A549 (cell line): ENCODE measurements at regions of chr19 and their contacts with region 1.

Region 1: DNA sequence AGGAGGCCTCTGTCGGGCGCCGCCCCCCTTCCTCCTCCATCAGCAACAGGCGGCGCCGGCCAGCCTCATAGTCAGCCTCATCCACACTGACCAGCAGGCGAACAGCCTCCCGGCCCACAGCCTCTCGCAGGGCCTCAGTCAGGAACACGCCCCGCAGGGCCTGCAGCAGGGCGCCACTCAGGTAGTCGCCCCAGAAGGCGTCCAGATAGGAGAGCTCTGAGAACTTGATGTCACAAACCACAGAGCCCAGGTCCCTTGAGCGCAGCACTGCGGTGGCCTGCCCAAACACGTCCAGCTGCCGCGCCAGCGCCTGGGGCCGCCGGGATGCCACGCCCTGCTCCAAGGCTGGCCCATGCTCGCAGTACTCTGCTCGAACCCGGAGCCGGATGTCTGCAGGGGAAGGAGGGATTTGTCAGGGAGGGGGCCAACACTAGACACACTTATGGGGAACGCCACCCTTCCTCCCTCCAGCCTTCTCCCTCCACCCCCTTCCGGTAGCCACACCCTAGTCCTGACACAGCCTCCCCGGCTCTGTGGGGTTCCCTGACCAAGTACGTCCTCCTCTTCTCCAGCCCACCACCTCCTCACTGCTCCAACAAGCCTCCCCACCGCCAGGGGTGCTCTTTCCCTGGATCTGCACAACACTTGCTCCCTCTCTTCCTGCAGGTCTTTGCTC is 17.9 kb downstream of the DEDD2 start:
- DNase-seq: no peak
- ATAC-seq: peak in 1 of 2 experiments; percentile 35; a peak in 3 of 6 replicates
- H3K4me3 ChIP-seq: no peak overlapping the region
- H3K27ac ChIP-seq: peak overlapping the region in 1 of 2 experiments; percentile 9; a peak in 1 of 6 replicates
- H3K4me1 ChIP-seq: no peaks in the 10 kb centered on the region
- CTCF ChIP-seq: no peak
- EP300 ChIP-seq: no peak
- POLR2A ChIP-seq: no peak
- RAD21 ChIP-seq: no peak

Region 2: DNA sequence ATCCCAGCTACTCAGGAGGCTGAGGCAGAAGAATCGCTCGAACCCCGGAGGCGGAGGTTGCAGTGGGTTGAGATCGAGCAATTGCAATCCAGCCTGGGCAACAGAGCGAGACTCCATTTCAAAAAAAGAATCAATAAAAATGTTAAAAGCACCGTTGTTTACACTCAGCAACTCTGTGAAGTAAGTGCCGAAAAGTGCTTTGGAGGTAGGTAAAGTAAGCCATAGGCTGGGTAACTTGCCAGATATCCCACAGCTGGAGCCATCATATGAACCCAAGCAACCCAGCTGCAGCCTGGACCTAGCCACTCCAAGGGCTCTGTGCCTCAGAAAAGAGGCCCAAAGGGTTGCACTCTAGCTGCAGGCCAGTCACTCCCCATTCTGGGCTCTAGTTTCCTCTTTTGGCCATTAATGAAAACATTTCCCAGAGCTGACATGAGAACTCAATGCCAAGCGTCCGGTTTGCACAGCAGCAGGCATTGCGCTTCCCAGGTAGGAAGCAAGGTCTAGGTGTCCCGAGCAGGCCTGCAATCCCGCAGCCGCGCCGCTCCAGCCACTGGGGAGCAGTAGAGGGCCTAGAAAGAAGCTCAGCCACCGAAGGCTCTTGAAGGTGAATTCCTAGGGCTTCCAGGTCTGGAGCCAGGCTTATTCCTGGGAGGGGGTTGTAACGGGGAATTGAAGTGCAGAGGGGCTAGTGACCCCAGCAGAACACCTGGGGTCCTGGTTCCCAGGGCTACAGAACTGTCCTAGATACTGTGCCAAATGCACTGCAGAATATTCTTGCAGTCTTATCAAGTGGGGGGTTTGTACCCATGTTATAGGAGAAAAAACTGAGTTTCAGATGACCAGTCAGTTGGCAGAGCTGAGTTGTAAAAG is 326.6 kb before region 1 on chr19:
- CTCF ChIA-PET with region 1: no interaction called
- POLR2A ChIA-PET with region 1: no interaction called
- DNase-seq: peak; percentile 90 to 94
- ATAC-seq: peak; percentile 63 to 79
- H3K4me3 ChIP-seq: no peak overlapping the region
- H3K27ac ChIP-seq: no peak overlapping the region
- H3K4me1 ChIP-seq: peaks cover 35% of the 10 kb centered on the region
- CTCF ChIP-seq: peak; percentile 94
- EP300 ChIP-seq: no peak
- POLR2A ChIP-seq: no peak
- RAD21 ChIP-seq: peak; percentile 87

Region 3: GRCh38 chr19:42219812-42220750 is 20.5 kb after region 1 on chr19 and contains the start of gene ZNF526:
- CTCF ChIA-PET with region 1: interaction called, 13 read pairs
- POLR2A ChIA-PET with region 1: no interaction called
- DNase-seq: peak; percentile 100
- ATAC-seq: peak; percentile 81 to 92
- H3K4me3 ChIP-seq: peak within 1 kb of the TSS; percentile 77
- H3K27ac ChIP-seq: peak within 1 kb of the TSS; percentile 85 to 89
- H3K4me1 ChIP-seq: peaks cover 39% of the 10 kb centered on the region
- CTCF ChIP-seq: no peak
- EP300 ChIP-seq: no peak
- POLR2A ChIP-seq: peak; percentile 87
- RAD21 ChIP-seq: no peak
- polyA plus RNA-seq, gene ZNF526: 7.1 and 8.7 TPM in 2 replicates

Region 4: DNA sequence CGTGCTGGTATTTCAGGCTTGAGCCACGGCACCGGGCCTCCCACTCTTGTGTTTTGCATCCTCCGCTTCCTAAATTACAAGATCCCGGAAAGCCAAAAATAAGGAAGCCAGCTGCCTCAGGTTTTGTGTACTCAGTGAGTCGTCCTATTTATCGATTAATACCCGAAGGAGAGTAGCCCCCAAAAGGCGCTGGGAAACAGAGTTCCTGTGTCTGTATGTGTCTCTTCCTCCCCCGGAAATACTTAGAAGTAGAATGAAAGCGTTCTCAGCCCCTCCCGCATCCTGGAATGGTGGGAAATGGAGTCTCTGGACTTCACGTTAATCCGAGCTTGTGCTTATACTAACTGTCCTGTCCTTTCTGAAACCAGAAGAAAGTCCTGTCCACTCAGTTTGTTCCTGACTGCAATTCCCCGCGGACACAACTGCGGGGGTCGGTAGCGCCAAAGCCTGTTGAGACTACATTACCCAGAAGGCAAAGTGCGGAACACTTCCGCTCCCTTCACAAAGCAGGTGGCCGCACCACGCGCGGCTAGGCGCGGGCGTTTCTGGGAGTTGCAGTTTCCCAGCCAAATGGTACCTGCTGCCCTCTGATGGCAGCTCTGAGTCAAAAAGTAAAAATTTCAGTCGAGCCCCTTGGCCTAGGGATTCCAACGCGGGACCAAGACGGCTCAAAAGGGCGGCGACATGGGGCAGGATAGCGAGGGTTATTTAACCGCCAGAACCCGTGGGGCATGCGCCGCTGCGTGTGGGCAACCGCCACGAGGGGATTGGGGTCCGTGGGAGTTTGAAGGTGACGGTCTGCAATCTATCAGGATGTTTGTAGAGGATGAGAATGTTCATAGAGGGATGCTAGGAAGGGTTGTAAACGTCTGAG is 45.0 kb after region 1 on chr19:
- CTCF ChIA-PET with region 1: no interaction called
- POLR2A ChIA-PET with region 1: no interaction called
- DNase-seq: peak; percentile 99
- ATAC-seq: peak; percentile 44 to 64
- H3K4me3 ChIP-seq: peak overlapping the region; percentile 65
- H3K27ac ChIP-seq: peak overlapping the region; percentile 87 to 90
- H3K4me1 ChIP-seq: peaks cover 60% of the 10 kb centered on the region
- CTCF ChIP-seq: peak; percentile 86
- EP300 ChIP-seq: no peak; a peak in 1 of 5 replicates
- POLR2A ChIP-seq: peak; percentile 18; the same call in 1 of the 2 replicates
- RAD21 ChIP-seq: peak; percentile 54 to 64

Region 5: DNA sequence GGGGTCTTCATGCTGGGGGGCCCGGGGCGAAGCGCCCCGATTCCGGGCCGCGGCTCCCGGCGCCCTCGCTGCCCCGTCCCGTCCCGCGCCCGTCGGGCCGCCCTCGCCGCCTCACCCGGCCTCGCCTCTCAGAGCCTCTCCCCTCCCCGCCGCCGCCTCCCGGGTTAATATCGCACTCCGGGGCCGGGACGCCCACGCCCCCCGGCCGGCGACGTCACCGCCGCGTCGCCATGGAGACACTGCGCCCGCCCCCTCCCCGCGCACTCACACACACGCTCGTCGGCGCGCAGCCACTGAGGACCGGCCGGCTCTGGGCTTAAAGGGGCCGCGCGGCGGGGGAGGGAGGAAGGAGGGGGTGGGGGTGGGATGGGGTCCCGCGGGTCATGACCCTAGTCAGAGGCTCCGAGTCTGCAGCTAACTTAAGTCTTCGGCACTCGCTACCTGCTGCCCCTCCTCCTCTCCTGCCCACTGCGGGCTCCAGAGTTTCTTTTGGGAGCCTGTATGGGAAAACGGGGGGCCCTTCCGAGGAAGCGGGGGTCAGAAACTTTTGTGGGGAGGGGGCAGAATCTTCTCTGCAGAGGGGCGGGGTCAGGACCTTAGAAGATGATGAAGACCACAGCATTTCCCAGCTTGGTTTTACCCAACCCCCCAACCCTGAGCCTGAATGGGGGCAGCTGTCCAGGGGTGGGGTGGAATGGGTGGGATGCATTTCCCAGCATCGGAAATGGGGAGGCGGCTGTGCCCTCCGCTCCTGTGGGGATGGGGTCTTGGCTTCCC is 55.6 kb after region 1 on chr19 and contains the start of gene ERF:
- CTCF ChIA-PET with region 1: no interaction called
- POLR2A ChIA-PET with region 1: no interaction called
- DNase-seq: peak; percentile 96 to 98
- ATAC-seq: peak; percentile 48 to 72
- H3K4me3 ChIP-seq: peak within 1 kb of the TSS; percentile 94
- H3K27ac ChIP-seq: peak within 1 kb of the TSS; percentile 94 to 96
- H3K4me1 ChIP-seq: peaks cover 46% of the 10 kb centered on the region
- CTCF ChIP-seq: no peak
- EP300 ChIP-seq: no peak; a peak in 1 of 5 replicates
- POLR2A ChIP-seq: peak; percentile 96
- RAD21 ChIP-seq: no peak
- polyA plus RNA-seq, gene ERF: 71.9 and 103 TPM in 2 replicates